Tibial artery (tissue), 4 donors: ENCODE measurements at regions of chr7 and their contacts with region 1.

Region 1: GRCh38 chr7:4610768-4611467 is 71.2 kb upstream of the FOXK1 start:
- DNase-seq: peak in 1 of 2 donors; percentile 32
- H3K4me3 ChIP-seq: no peak overlapping the region
- H3K27ac ChIP-seq: no peak overlapping the region
- H3K4me1 ChIP-seq: peaks cover 0 to 19% (median 9%) of the 10 kb centered on the region in 4 donors
- H3K27me3 ChIP-seq: no peaks in the 10 kb centered on the region
- CTCF ChIP-seq: peak; percentile 85 to 88

Region 2: DNA sequence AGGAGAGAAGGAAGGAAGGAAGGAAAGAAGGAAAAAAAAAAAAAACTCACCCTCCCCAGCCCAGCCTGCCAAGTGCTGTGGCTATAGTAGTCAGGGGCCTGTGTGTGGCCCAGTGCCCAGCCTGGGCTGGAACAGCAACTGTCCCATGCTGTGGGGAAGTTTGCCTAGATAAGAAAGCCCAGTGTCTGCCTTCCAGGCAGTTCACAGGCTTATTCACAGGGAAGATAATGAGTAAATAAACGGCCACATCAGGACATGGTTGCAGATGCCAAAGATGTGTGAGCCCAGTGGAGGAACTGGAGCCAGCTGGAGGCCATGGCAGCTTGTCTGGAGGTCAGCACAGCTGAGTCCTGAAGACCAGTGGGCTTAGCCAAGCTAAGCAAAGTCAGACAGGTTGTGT is 61.2 kb before region 1 on chr7:
- intact Hi-C with region 1: no loop called
- DNase-seq: peak in 1 of 2 donors; percentile 35
- H3K4me3 ChIP-seq: no peak overlapping the region
- H3K27ac ChIP-seq: no peak overlapping the region
- H3K4me1 ChIP-seq: no peaks in the 10 kb centered on the region
- H3K27me3 ChIP-seq: peaks cover 0 to 4% of the 10 kb centered on the region in 2 donors
- CTCF ChIP-seq: no peak

Region 3: GRCh38 chr7:4621401-4622145 is 10.7 kb after region 1 on chr7:
- intact Hi-C with region 1: loop called (anchors 2 kb)
- DNase-seq: no peak
- H3K4me3 ChIP-seq: no peak overlapping the region
- H3K27ac ChIP-seq: no peak overlapping the region
- H3K4me1 ChIP-seq: peaks cover 0 to 24% (median 8%) of the 10 kb centered on the region in 4 donors
- H3K27me3 ChIP-seq: no peaks in the 10 kb centered on the region
- CTCF ChIP-seq: no peak